Caco-2 (cell line): ENCODE measurements at regions of chrX and their contacts with region 1.

Region 1: GRCh38 chrX:123665197-123665596 is 67.7 kb downstream of the THOC2 start:
- DNase-seq: peak in 1 of 2 experiments; percentile 1
- H3K4me3 ChIP-seq: no peak overlapping the region
- H3K4me3 Mint-ChIP-seq: no peak overlapping the region
- H3K27ac Mint-ChIP-seq: no peak overlapping the region
- H3K4me1 ChIP-seq: no peaks in the 10 kb centered on the region
- H3K4me1 Mint-ChIP-seq: no peaks in the 10 kb centered on the region
- H3K27me3 ChIP-seq: no peaks in the 10 kb centered on the region
- H3K27me3 Mint-ChIP-seq: no peaks in the 10 kb centered on the region
- CTCF ChIP-seq: no peak

Region 2: DNA sequence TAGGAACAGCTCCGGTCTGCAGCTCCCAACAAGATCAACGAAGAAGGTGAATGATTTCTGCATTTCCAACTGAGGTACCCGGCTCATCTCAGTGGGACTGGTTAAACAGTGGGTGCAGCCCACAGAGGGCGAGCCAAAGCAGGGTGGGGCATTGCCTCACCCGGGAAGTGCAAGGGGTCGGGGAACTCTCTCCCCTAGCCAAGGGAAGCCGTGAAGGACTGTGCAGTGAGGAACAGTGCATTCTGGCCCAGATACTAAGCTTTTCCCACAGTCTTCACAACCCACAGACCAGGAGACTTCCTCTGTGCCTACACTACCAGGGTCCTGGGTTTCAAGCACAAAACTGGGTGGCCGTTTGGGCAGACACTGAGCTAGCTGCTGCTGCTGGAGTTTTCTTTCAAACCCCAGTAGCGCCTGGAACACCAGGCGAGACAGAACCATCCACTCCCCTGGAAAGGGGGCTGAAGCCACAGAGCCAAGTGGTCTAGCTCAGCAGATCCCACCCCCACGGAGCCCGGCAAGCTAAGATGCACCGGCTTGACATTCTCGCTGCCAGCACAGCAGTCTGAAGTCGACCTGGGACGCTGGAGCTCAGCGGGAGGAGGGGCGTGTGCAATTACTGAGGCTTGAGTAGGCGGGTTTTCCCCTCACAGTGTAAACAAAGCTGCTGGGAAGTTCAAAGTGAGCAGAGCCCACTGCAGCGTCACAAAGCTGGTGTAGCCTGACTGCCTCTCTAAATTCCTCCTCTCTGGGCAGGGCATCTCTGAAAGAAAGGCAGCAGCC is 17.0 kb before region 1 on chrX:
- CTCF ChIA-PET with region 1: no interaction called
- POLR2A ChIA-PET with region 1: no interaction called
- intact Hi-C with region 1: loop called (anchors 2 kb)
- DNase-seq: peak; percentile 64 to 67
- H3K4me3 ChIP-seq: no peak overlapping the region
- H3K4me3 Mint-ChIP-seq: no peak overlapping the region
- H3K27ac Mint-ChIP-seq: peak overlapping the region; percentile 60
- H3K4me1 ChIP-seq: peaks cover 6% of the 10 kb centered on the region; the same call in 1 of the 2 replicates
- H3K4me1 Mint-ChIP-seq: peaks cover 24% of the 10 kb centered on the region
- H3K27me3 ChIP-seq: no peaks in the 10 kb centered on the region
- H3K27me3 Mint-ChIP-seq: no peaks in the 10 kb centered on the region
- CTCF ChIP-seq: no peak